BJ (cell line): ENCODE measurements at regions of chr3 and their contacts with region 1.

Region 1: GRCh38 chr3:161409069-161409468 is 37.8 kb upstream of the SPTSSB start:
- DNase-seq: no peak
- H3K4me3 ChIP-seq: no peak overlapping the region
- H3K27me3 ChIP-seq: no peaks in the 10 kb centered on the region; the same call in 1 of the 2 replicates
- CTCF ChIP-seq: peak; percentile 64

Region 2: GRCh38 chr3:161305095-161305991 is 103.7 kb before region 1 on chr3:
- CTCF ChIA-PET with region 1: interaction called, 11 read pairs
- POLR2A ChIA-PET with region 1: no interaction called
- DNase-seq: no peak
- H3K4me3 ChIP-seq: no peak overlapping the region
- H3K27me3 ChIP-seq: no peaks in the 10 kb centered on the region
- CTCF ChIP-seq: peak; percentile 75

Region 3: DNA sequence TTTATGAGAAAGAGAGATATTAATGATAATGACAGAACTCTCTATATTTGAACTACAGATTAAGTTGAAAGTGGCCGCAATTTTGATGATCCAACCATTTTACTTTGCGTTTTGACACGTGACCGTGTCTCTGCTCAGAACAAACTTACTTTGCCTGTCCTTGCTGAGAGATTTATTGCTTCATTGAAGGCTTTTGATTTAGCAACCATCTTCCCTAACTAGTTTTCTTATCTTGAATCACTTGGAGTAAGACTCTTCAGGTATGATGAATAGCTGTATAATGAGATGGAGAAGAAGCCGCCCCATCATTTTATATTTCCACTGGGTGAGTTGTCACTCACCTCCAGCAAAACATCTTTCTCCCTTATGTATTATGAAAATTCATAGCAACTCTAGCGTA is 29.6 kb before region 1 on chr3:
- CTCF ChIA-PET with region 1: no interaction called
- POLR2A ChIA-PET with region 1: no interaction called
- DNase-seq: no peak
- H3K4me3 ChIP-seq: no peak overlapping the region
- H3K27me3 ChIP-seq: no peaks in the 10 kb centered on the region
- CTCF ChIP-seq: no peak

Region 4: DNA sequence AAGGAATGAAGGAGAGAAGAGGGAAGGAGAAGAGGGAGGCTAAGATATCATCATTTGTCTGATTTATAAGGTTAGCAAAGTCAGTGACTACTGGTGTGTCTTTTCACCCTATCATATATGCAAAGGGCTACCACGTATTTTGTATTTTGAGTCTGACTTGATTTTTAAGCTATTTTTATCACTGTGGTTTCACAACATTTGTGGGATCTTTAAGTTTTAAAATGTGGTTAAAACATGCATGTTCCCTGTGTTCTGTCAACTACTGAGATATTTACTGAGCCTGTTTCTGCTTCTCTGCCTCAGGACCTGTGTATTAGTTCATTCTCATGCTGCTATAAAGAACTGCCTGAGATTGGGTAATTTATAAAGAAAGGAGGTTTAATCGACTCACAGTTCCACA is 15.3 kb before region 1 on chr3:
- CTCF ChIA-PET with region 1: interaction called, 15 read pairs
- POLR2A ChIA-PET with region 1: no interaction called
- DNase-seq: no peak
- H3K4me3 ChIP-seq: no peak overlapping the region
- H3K27me3 ChIP-seq: no peaks in the 10 kb centered on the region
- CTCF ChIP-seq: no peak